Adrenal gland (tissue), 19 donors: ENCODE measurements at regions of chr16 and their contacts with region 1.

Region 1: GRCh38 chr16:69494993-69495392 is 70.6 kb downstream of the CYB5B start:
- DNase-seq: peak in 2 of 7 donors; percentile 30 to 59
- H3K4me3 ChIP-seq: no peak overlapping the region
- H3K27ac ChIP-seq: no peak overlapping the region
- H3K4me1 ChIP-seq: peaks cover 0 to 7% of the 10 kb centered on the region in 2 donors
- H3K27me3 ChIP-seq: no peaks in the 10 kb centered on the region
- CTCF ChIP-seq: peak in 2 of 6 experiments; percentile 18 to 37
- POLR2A ChIP-seq: no peak

Region 2: DNA sequence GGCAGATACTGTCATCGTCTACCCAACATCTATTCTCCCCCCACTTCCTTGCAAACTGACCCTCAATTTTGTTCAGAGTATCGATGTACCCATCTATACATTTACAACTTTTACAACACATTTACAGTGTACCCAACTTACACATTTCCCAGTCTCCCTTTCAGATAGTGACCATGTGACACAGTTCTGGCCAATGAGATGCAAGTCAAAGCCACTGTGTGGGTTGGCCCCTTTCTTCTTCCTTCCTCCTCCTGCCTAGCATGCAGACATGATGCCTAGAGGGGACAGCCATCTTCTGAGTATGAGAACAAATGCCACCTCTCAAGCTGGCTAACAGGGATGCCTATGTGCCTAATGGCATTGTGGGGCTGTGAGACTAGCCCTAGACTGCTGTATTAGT is 59.5 kb after region 1 on chr16:
- intact Hi-C with region 1: loop called in 1 of 2 experiments (anchors 10 kb)
- DNase-seq: no peak
- H3K4me3 ChIP-seq: no peak overlapping the region
- H3K27ac ChIP-seq: no peak overlapping the region
- H3K4me1 ChIP-seq: no peaks in the 10 kb centered on the region
- H3K27me3 ChIP-seq: no peaks in the 10 kb centered on the region
- CTCF ChIP-seq: no peak
- POLR2A ChIP-seq: no peak

Region 3: DNA sequence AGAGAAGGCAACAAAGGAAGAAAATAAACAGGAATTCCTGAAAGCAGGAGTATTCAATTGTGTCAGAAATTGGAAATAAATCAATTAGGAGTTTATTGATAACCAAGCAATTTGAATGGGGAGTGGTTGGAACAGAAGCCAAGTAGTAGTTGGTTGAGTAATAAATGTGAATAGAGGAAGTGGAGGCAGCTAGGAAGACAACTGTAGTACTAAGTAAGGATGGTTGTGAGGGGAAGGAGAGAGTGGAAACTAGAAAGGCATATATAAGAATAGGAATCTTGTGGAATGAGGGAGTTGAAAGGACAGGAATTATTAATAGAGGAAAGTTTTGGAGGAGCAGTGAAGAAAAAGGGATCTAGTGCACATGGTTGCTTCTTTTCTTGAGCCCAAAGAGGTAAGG is 105.2 kb after region 1 on chr16:
- intact Hi-C with region 1: no loop called
- DNase-seq: no peak
- H3K4me3 ChIP-seq: no peak overlapping the region
- H3K27ac ChIP-seq: no peak overlapping the region
- H3K4me1 ChIP-seq: peaks cover 6 to 25% of the 10 kb centered on the region in 2 donors
- H3K27me3 ChIP-seq: no peaks in the 10 kb centered on the region
- CTCF ChIP-seq: no peak
- POLR2A ChIP-seq: no peak

Region 4: GRCh38 chr16:69709456-69710084 is 214.6 kb after region 1 on chr16:
- intact Hi-C with region 1: no loop called
- DNase-seq: peak in 2 of 7 donors; percentile 13 to 43
- H3K4me3 ChIP-seq: no peak overlapping the region
- H3K27ac ChIP-seq: peak overlapping the region in 3 of 5 donors; percentile 23 to 52 (median 39)
- H3K4me1 ChIP-seq: peaks cover 0 to 6% of the 10 kb centered on the region in 2 donors
- H3K27me3 ChIP-seq: no peaks in the 10 kb centered on the region
- CTCF ChIP-seq: peak; percentile 68 to 90 (median 82)
- POLR2A ChIP-seq: no peak